ENCODE measurements at regions of chr3 and their contacts with region 1.

Region 1: DNA sequence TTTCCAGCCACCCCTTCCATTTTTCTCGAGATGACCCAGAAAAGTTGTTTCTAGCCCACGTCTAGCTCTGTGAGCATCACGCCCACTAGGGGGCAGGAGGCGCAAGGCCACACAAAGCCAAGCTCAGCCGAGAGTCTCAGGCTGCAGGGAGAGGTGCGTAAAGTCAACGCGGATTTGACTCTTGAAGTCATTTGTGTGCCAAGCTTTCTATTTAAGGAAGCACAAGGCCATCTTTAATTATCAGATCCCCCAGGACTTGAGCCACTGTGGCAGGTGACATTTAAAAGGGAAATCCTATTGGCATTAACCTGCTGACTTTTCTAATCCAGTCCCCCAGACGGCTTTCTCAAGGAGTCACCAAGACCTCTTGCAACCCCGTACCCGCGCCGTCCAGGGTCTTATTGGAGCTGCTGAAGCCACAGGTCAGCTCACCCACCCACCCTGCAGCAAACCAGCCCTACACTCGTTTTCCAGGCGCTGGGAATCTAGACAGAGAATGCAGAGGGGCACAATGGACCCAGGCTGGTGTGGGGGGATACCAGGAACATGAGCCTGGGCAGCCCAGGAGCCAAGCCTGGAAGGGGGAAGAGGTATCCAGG is 62.1 kb downstream of the CAPN7 start:
- DNase-seq: peak; percentile 93
- H3K4me3 Mint-ChIP-seq: no peak overlapping the region
- H3K27ac Mint-ChIP-seq: no peak overlapping the region
- H3K4me1 Mint-ChIP-seq: peaks cover 61% of the 10 kb centered on the region
- H3K27me3 Mint-ChIP-seq: no peaks in the 10 kb centered on the region

Region 2: DNA sequence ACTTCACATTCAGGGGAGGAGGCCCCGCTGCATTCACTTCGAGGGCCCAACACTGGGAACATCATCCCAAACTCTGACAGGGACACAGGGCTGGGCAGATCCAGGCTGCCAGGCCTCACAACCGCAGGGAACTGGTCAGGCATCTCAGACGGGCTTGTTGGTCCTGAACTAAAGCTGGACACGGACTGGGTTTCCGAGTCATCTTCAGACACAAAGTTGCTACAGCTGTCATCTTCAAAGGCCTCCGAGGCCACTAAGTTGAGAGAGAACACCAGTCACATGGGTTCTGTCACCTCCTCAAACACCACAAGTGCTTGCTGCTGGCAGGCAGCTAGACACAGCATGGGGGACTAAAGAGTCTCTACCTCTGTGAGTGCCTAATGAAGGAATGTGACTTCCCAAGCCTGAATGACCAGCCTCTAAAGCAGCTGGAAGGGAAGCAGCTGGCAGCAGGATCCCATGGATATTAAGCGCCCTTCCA is 11.2 kb before region 1 on chr3:
- CTCF ChIA-PET with region 1: interaction called, 21 read pairs
- intact Hi-C with region 1: no loop called
- DNase-seq: no peak
- H3K4me3 Mint-ChIP-seq: no peak overlapping the region
- H3K27ac Mint-ChIP-seq: no peak overlapping the region
- H3K4me1 Mint-ChIP-seq: peaks cover 7% of the 10 kb centered on the region
- H3K27me3 Mint-ChIP-seq: no peaks in the 10 kb centered on the region

Region 3: GRCh38 chr3:15319575-15319974 is 51.4 kb after region 1 on chr3:
- CTCF ChIA-PET with region 1: interaction called, 12 read pairs
- intact Hi-C with region 1: no loop called
- DNase-seq: no peak
- H3K4me3 Mint-ChIP-seq: no peak overlapping the region
- H3K27ac Mint-ChIP-seq: no peak overlapping the region
- H3K4me1 Mint-ChIP-seq: peaks cover 60% of the 10 kb centered on the region
- H3K27me3 Mint-ChIP-seq: no peaks in the 10 kb centered on the region

Region 4: DNA sequence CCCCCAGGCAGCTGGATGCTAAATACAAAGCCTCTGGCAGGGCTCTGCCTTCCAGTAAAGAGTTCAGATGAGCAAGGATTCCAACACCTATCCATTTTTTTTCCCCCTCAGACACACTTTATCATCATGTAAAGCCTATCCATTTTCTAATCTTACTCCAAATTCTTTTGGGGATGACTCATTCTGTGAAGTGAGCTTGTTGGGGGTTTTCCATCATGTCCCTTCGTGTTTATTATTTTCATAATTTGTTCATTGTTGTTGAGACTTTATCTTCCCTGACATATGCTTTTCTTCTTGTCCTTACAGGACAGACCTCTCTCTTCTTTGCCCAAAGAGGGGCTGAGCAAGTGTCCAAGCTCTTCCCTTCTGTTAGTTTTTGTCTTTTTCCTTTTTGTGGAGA is 98.9 kb after region 1 on chr3:
- CTCF ChIA-PET with region 1: interaction called, 13 read pairs
- intact Hi-C with region 1: no loop called
- DNase-seq: no peak
- H3K4me3 Mint-ChIP-seq: no peak overlapping the region
- H3K27ac Mint-ChIP-seq: no peak overlapping the region
- H3K4me1 Mint-ChIP-seq: peaks cover 17% of the 10 kb centered on the region
- H3K27me3 Mint-ChIP-seq: peaks cover 2% of the 10 kb centered on the region

Region 5: DNA sequence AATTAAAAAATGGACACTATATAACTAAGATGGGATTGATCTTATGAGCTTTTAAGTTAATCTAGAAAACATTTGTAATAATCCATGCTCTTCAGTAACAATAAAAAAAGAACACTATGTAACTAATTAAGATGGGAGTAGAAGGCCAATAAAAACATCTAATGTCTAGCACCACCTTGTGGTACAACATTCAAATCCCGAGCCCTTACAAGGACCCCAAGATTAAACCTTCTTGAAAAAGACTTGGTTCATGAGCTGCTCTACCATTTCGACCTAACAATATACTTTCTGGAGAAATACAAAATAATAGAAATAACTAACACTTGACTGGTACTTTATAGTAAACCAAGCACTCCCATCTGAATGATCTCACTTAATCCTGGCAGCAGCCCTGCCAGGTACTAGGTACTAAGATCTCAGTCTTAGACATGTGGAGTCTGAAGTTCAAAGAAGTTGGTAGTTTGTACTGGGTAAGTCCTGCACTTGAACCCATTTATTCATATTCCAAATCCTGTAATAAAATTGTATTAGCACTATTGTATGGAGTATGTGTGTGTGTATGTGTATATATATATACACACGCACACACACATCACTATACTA is 137.4 kb after region 1 on chr3:
- CTCF ChIA-PET with region 1: interaction called, 115 read pairs
- intact Hi-C with region 1: loop called (anchors 1 kb)
- DNase-seq: peak; percentile 10
- H3K4me3 Mint-ChIP-seq: no peak overlapping the region
- H3K27ac Mint-ChIP-seq: no peak overlapping the region
- H3K4me1 Mint-ChIP-seq: peaks cover 1% of the 10 kb centered on the region
- H3K27me3 Mint-ChIP-seq: no peaks in the 10 kb centered on the region

Region 6: GRCh38 chr3:16286161-16286560 is 1018.0 kb after region 1 on chr3:
- CTCF ChIA-PET with region 1: no interaction called
- intact Hi-C with region 1: no loop called
- DNase-seq: peak; percentile 85
- H3K4me3 Mint-ChIP-seq: peak overlapping the region; percentile 84
- H3K27ac Mint-ChIP-seq: peak overlapping the region; percentile 97
- H3K4me1 Mint-ChIP-seq: peaks cover 72% of the 10 kb centered on the region
- H3K27me3 Mint-ChIP-seq: no peaks in the 10 kb centered on the region